Naive thymus-derived CD4-positive, alpha-beta T cell (primary cell): ENCODE measurements at regions of chr1 and their contacts with region 1.

Region 1: DNA sequence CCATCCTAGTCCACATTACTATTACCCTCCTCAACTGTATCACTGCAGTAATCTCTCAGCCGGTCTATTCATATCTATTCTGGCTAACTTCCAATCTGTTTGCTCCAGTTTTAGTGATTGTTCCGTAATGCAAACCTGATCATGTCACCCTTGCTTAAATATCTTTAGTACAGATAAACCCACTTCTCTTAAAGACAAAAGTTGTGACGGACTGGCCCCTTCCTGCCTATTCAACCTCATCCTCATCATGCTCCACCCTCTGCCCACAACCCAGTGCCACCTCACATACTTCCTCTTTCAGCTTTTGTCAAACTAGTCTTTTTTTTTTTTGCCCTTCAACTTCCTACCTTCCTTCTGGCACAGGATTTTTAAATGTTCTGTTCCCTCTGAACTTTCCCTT is 2.8 kb upstream of the C1orf162 start:
- DNase-seq: peak in 8 of 9 donors; percentile 40 to 89 (median 84)
- ATAC-seq: peak; percentile 96
- H3K4me3 ChIP-seq: peak overlapping the region; percentile 37
- H3K4me3 Mint-ChIP-seq: no peak overlapping the region
- H3K27ac ChIP-seq: peak overlapping the region; percentile 68
- H3K27ac Mint-ChIP-seq: no peak overlapping the region
- H3K4me1 ChIP-seq: peaks cover 45 to 49% of the 10 kb centered on the region in 2 donors
- H3K4me1 Mint-ChIP-seq: peaks cover 10 to 26% (median 15%) of the 10 kb centered on the region in 7 donors
- H3K27me3 ChIP-seq: no peaks in the 10 kb centered on the region
- H3K27me3 Mint-ChIP-seq: no peaks in the 10 kb centered on the region

Region 2: GRCh38 chr1:111481387-111482221 is 10.6 kb after region 1 on chr1:
- CTCF ChIA-PET with region 1: interaction called, 5 read pairs
- POLR2A ChIA-PET with region 1: interaction called, 12 read pairs
- intact Hi-C with region 1: no loop called
- DNase-seq: peak; percentile 23 to 65 (median 54)
- ATAC-seq: peak; percentile 80
- H3K4me3 ChIP-seq: no peak overlapping the region
- H3K4me3 Mint-ChIP-seq: peak overlapping the region in 1 of 10 donors; percentile 20
- H3K27ac ChIP-seq: no peak overlapping the region
- H3K27ac Mint-ChIP-seq: peak overlapping the region in 4 of 9 donors; percentile 22 to 86 (median 56)
- H3K4me1 ChIP-seq: peaks cover 22 to 25% of the 10 kb centered on the region in 2 donors
- H3K4me1 Mint-ChIP-seq: peaks cover 32 to 68% (median 53%) of the 10 kb centered on the region in 7 donors
- H3K27me3 ChIP-seq: no peaks in the 10 kb centered on the region
- H3K27me3 Mint-ChIP-seq: peaks cover 0 to 25% (median 0%) of the 10 kb centered on the region in 5 donors